Endothelial cell of umbilical vein (primary cell): ENCODE measurements at regions of chr4 and their contacts with region 1.

Region 1: DNA sequence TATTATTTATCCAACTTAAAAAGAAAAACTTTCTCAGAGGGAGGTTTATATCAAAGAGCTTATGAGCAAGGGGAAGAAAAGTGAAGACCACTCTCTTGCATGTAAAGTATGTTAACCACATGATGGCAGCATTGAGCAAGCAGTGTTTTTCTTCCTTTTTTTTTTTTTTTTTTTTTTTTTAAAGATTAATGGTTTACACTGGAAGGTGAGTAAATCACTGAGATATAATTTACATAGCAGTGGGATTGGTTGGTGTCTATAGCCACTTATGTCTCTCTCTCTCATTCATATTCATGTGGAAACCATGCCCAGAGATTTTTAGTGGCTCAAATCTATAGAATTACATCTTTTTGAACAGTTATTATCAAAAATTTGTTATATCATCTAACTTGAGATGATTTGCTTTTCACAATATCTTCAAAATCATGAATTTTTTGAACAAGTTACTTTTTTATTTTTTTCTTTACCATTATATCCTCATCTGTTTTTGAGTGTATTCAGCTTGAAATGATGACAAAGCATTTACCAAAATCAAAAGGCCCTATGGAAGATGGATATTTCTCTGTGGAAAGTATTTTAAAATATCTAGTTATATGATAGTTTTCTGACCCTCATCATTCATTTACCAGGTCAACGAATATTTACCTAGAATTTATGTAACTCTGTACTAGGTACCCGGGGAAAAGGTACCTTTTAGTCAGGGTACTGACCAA is 31.6 kb downstream of the MTHFD2L start:
- DNase-seq: peak; percentile 66
- H3K4me3 ChIP-seq: no peak overlapping the region
- H3K27ac ChIP-seq: no peak overlapping the region
- H3K4me1 ChIP-seq: no peaks in the 10 kb centered on the region
- H3K27me3 ChIP-seq: no peaks in the 10 kb centered on the region
- CTCF ChIP-seq: peak; percentile 37 to 63
- POLR2A ChIP-seq: no peak

Region 2: GRCh38 chr4:74297539-74297938 is 108.1 kb after region 1 on chr4:
- CTCF ChIA-PET with region 1: interaction called, 13 read pairs
- POLR2A ChIA-PET with region 1: no interaction called
- dilution Hi-C with region 1: no loop called
- intact Hi-C with region 1: no loop called
- DNase-seq: no peak
- H3K4me3 ChIP-seq: no peak overlapping the region
- H3K27ac ChIP-seq: no peak overlapping the region
- H3K4me1 ChIP-seq: no peaks in the 10 kb centered on the region
- H3K27me3 ChIP-seq: no peaks in the 10 kb centered on the region
- CTCF ChIP-seq: no peak
- POLR2A ChIP-seq: no peak

Region 3: DNA sequence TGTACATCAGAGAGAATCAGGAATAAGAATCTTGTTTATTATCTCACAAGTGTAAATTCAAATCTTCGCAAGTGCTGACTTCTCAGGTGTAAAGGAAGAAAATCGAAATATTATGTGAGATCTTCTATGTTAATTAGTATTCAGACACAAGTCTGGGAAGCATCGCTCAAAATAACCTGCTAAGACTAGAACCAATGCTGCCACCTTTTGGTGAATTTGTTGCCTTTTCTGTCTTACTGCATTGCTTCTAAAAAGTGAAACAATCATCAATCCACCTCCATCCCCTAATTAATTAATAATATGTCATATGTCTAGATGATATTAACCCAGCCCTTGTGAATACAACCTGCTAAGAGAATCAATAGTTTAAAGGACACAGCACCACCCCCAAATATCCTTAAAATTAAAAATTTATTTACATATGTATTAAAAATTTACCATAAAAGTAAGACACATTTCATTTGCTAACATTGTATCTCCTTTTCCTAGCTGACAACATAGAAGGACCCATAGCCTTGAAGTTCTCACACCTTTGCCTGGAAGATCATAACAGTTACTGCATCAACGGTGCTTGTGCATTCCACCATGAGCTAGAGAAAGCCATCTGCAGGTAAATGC is 122.3 kb after region 1 on chr4:
- CTCF ChIA-PET with region 1: interaction called, 54 read pairs
- POLR2A ChIA-PET with region 1: no interaction called
- dilution Hi-C with region 1: no loop called
- intact Hi-C with region 1: loop called (anchors 1 kb)
- DNase-seq: peak; percentile 70
- H3K4me3 ChIP-seq: no peak overlapping the region
- H3K27ac ChIP-seq: no peak overlapping the region
- H3K4me1 ChIP-seq: no peaks in the 10 kb centered on the region
- H3K27me3 ChIP-seq: no peaks in the 10 kb centered on the region
- CTCF ChIP-seq: peak; percentile 47 to 60
- POLR2A ChIP-seq: no peak